ENCODE measurements at regions of chr4 and their contacts with region 1.

Region 1: DNA sequence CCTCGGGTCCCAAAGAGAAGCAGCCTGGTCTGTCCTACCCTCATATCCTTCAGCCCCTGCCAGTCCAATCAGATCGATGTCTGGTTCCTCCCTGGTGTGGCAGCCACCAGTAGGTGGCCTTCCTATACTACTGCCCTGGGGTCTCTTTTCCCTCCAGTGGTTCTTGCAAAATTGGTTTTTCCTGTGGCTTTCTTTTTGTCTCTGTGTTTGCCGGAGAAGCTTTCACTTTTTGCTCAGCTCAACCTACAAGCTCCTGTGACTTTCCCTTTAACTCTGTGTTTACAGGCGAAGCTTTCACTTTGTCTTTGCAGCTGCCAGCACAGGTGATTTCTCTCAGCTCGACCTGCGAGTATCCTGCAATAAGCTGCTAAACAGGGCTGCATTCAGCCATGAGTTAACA is 46.8 kb downstream of the UGT2A3 start:
- DNase-seq: peak; percentile 62 to 63
- H3K4me3 ChIP-seq: no peak overlapping the region
- H3K4me3 Mint-ChIP-seq: peak overlapping the region; percentile 83
- H3K27ac Mint-ChIP-seq: peak overlapping the region; percentile 94
- H3K4me1 ChIP-seq: peaks cover 47% of the 10 kb centered on the region
- H3K4me1 Mint-ChIP-seq: peaks cover 17% of the 10 kb centered on the region
- H3K27me3 ChIP-seq: no peaks in the 10 kb centered on the region
- H3K27me3 Mint-ChIP-seq: no peaks in the 10 kb centered on the region
- CTCF ChIP-seq: peak; percentile 44 to 54

Region 2: GRCh38 chr4:68271851-68272756 is 632.7 kb before region 1 on chr4:
- CTCF ChIA-PET with region 1: no interaction called
- POLR2A ChIA-PET with region 1: no interaction called
- intact Hi-C with region 1: loop called (anchors 5 kb)
- DNase-seq: peak in 1 of 2 experiments; percentile 49
- H3K4me3 ChIP-seq: no peak overlapping the region
- H3K4me3 Mint-ChIP-seq: no peak overlapping the region
- H3K27ac Mint-ChIP-seq: peak overlapping the region; percentile 94
- H3K4me1 ChIP-seq: peaks cover 29% of the 10 kb centered on the region
- H3K4me1 Mint-ChIP-seq: peaks cover 5% of the 10 kb centered on the region
- H3K27me3 ChIP-seq: no peaks in the 10 kb centered on the region
- H3K27me3 Mint-ChIP-seq: no peaks in the 10 kb centered on the region
- CTCF ChIP-seq: peak; percentile 50 to 75

Region 3: DNA sequence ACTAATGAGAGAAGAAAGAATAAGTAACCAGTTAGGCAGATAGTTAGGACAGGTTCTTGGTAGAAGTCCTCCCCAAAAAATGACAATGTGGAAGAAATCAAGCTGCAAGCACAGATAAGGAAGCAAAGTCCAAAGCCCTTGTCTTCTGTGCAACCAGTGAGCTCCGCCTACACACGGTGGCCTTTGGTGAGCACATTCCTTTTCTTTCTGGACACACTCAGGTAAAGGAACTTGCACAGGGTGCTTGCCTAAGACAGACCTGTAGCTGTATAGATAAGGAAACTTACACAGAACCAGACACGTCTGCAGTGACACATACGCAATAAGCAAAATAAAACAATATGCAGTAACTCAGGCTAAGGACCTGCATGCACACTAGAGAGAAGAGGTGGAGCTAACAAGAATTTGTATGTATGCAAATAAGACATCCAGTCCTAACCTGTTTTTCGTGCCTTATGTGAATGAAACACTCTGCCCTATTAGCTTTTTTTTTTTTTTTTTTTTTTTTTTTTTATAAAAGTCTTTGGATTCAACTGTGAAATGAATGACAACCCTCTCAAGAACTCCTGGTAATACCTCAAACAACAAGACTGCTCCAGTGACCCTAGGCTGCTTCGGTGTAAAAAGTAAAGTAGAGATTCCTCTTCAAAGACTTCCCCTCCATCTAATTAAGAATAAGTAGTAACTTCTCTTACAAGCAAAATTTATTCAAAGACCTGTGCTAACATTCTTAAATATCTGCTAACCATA is 40.2 kb before region 1 on chr4:
- CTCF ChIA-PET with region 1: interaction called, 3 read pairs
- POLR2A ChIA-PET with region 1: interaction called, 7 read pairs
- intact Hi-C with region 1: loop called (anchors 2 kb)
- DNase-seq: peak; percentile 89 to 96
- H3K4me3 ChIP-seq: no peak overlapping the region
- H3K4me3 Mint-ChIP-seq: peak overlapping the region; percentile 54
- H3K27ac Mint-ChIP-seq: peak overlapping the region; percentile 82
- H3K4me1 ChIP-seq: peaks cover 34% of the 10 kb centered on the region
- H3K4me1 Mint-ChIP-seq: peaks cover 32% of the 10 kb centered on the region
- H3K27me3 ChIP-seq: no peaks in the 10 kb centered on the region
- H3K27me3 Mint-ChIP-seq: no peaks in the 10 kb centered on the region
- CTCF ChIP-seq: no peak

Region 4: DNA sequence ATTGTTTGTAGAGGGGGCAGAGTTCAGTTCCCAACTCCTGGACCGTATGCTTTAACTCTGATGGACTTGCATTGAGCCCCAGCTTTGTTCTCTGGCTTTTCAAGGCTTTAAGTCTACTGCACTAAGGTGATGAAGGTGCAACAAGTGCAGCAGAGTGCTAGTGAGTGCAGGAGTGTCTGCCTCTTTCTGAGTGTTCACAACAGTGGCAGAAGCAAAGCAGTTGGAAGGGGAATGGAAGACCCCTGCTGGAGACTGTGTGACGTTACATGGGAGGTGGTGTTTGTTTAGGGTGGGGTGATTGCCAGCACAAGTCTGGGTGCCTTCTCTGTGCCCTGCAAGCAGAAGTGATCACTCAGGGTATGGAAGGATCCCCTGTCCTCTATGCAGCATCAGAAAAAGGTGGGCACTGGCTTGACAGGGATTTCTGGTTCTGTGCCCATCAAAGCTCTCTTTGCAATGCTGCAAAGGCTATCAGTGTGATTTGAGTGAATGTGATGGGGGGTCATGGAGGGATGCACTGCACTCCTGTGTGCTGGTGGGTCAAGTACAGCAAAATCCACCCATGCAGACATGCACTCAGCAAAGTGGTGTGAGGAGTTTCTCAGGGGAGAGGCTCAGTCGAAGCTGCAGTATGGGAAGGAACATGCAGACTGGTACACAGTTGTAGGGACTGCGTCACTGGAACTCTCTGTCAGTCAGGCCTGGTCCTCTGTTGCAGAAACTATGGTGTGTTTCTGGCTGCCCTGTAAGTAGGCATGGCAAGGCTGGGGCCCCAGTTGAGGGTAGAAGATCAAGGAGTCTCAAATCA is 120.6 kb after region 1 on chr4:
- CTCF ChIA-PET with region 1: no interaction called
- POLR2A ChIA-PET with region 1: no interaction called
- intact Hi-C with region 1: loop called (anchors 1 kb)
- DNase-seq: peak; percentile 39 to 47
- H3K4me3 ChIP-seq: no peak overlapping the region
- H3K4me3 Mint-ChIP-seq: no peak overlapping the region
- H3K27ac Mint-ChIP-seq: no peak overlapping the region
- H3K4me1 ChIP-seq: peaks cover 10% of the 10 kb centered on the region
- H3K4me1 Mint-ChIP-seq: peaks cover 4% of the 10 kb centered on the region
- H3K27me3 ChIP-seq: no peaks in the 10 kb centered on the region
- H3K27me3 Mint-ChIP-seq: no peaks in the 10 kb centered on the region
- CTCF ChIP-seq: peak; percentile 35 to 53

Region 5: GRCh38 chr4:69167300-69167699 is 262.5 kb after region 1 on chr4:
- CTCF ChIA-PET with region 1: interaction called, 3 read pairs
- POLR2A ChIA-PET with region 1: no interaction called
- intact Hi-C with region 1: loop called (anchors 2 kb)
- DNase-seq: no peak
- H3K4me3 ChIP-seq: no peak overlapping the region
- H3K4me3 Mint-ChIP-seq: no peak overlapping the region
- H3K27ac Mint-ChIP-seq: no peak overlapping the region
- H3K4me1 ChIP-seq: 0 out of 2 replicates have a peak, but pooled peaks cover 4% of the 10 kb centered on the region
- H3K4me1 Mint-ChIP-seq: peaks cover 6% of the 10 kb centered on the region
- H3K27me3 ChIP-seq: no peaks in the 10 kb centered on the region
- H3K27me3 Mint-ChIP-seq: no peaks in the 10 kb centered on the region
- CTCF ChIP-seq: no peak

Measured in Caco-2 (cell line).